ENCODE measurements at regions of chr2 and their contacts with region 1.

Region 1: DNA sequence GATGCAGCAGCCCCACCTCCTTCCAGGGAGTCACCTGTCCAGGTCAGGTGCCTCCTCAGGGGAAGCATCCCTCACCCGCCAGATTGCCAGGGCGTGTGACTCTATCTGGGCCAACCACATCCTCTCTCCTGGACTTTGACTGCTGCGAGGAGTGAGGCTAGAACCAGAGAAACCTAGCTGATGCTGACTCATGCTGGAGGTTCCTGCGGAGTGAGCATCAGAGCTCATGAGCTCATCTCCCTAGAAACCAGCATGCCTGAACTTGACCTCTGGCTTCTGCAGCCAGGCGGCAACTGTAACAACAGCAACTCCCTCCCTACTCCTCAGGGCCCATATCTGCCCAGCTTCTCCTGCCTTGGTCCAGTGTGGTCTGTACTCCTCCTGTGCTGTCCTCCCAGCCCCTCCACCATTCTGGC is 28.3 kb upstream of the NT5DC4 start:
- DNase-seq: peak in 2 of 5 donors; percentile 25 to 45
- ATAC-seq: peak in 3 of 4 donors; percentile 61 to 83 (median 73)
- H3K4me3 ChIP-seq: no peak overlapping the region
- H3K27ac ChIP-seq: peak overlapping the region in 1 of 12 donors; percentile 77
- H3K4me1 ChIP-seq: peaks cover 0 to 28% (median 0%) of the 10 kb centered on the region in 12 donors
- H3K27me3 ChIP-seq: no peaks in the 10 kb centered on the region
- CTCF ChIP-seq: no peak
- POLR2A ChIP-seq: no peak

Region 2: DNA sequence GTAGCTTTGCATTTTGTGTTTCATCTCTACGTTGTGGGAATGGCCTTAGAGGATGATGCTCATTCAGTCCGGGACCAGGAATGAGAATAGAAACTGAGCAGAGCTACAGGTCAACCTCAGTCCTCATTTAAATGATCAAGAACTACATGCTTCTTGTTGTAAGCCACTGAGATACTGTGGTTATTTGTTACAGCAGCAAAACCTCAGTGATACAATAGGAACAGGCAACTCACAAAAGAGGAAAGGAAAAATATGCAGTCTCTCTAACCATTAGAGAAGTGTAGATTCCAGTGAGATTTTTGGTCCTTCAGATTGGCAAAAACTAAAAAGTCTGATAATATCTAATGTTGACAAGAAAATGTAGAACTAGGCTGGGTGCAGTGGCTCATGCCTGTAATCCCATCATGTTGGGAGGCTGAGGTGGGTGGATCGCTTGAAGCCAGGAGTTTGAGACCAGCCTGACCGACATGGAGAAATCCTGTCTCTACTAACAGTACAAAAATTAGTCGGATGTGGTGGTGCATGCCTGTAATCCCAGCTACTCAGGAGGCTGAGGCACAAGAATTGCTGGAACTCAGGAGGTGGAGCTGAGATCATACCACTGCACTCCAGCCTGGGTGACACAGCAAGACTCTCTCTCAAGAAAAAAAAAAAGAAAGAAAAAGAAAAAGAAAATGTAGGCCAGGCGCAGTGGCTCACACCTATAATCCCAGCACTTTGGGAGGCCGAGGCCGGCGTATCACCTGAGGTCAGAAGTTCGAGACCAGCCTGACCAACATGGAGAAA is 94.8 kb before region 1 on chr2:
- intact Hi-C with region 1: loop called in 1 of 10 experiments (anchors 2 kb)
- DNase-seq: peak in 1 of 5 donors; percentile 1
- ATAC-seq: no peak
- H3K4me3 ChIP-seq: no peak overlapping the region
- H3K27ac ChIP-seq: no peak overlapping the region
- H3K4me1 ChIP-seq: peaks cover 0 to 14% (median 3%) of the 10 kb centered on the region in 12 donors
- H3K27me3 ChIP-seq: no peaks in the 10 kb centered on the region
- CTCF ChIP-seq: no peak
- POLR2A ChIP-seq: no peak

Region 3: DNA sequence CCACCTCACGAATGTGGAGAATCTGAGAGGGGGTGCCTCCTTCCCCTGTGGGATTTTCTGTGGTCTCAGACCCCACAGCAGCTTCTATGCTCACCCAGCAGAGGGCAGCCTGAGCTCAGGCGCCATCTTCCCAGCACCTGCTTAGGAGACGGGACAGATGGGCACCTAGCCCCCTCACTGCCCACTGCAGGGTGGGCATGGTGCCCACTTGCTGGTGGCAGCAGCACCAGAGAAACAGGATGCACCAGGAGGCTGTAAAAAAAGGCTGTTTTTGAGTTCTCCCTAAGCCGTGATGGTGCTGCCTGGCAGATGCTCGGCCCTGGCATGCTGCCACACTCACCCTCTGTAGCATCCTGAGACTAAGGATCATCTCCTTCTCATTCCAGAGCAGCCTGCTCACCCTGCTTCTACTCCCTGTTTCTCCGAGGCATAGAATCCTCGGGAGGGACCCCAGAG is 65.9 kb before region 1 on chr2:
- intact Hi-C with region 1: loop called in 9 of 10 experiments (anchors 1 to 10 kb)
- DNase-seq: peak; percentile 57 to 82 (median 62)
- ATAC-seq: peak; percentile 69 to 79 (median 74)
- H3K4me3 ChIP-seq: peak overlapping the region in 4 of 12 donors; percentile 10 to 34 (median 12)
- H3K27ac ChIP-seq: peak overlapping the region in 11 of 12 donors; percentile 56 to 87 (median 77)
- H3K4me1 ChIP-seq: peaks cover 0 to 79% (median 26%) of the 10 kb centered on the region in 12 donors
- H3K27me3 ChIP-seq: no peaks in the 10 kb centered on the region
- CTCF ChIP-seq: peak; percentile 70 to 91 (median 85)
- POLR2A ChIP-seq: no peak

Region 4: DNA sequence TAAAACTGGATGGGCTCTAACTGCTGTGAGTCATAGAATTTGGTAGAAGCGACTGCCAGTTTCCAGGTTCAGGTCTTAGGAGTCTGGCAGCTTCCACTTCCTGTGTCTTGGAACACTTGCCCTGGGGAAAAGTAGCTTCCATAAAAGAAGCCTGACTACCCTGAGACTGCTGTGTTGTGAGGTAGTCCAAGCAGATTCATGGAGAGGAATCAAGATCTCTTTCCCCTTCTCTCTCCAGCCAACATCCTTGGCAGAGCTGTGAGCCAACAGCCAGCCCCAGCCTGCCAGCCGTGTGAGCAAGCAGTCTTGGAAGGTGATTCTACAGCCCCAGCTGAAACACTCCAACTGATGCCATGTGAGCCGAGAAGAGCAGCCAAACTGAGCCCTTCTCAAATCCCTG is 13.0 kb before region 1 on chr2:
- intact Hi-C with region 1: no loop called
- DNase-seq: no peak
- ATAC-seq: peak in 1 of 4 donors; percentile 46
- H3K4me3 ChIP-seq: no peak overlapping the region
- H3K27ac ChIP-seq: peak overlapping the region in 1 of 12 donors; percentile 17
- H3K4me1 ChIP-seq: peaks cover 0 to 32% (median 0%) of the 10 kb centered on the region in 12 donors
- H3K27me3 ChIP-seq: no peaks in the 10 kb centered on the region
- CTCF ChIP-seq: no peak
- POLR2A ChIP-seq: no peak

Region 5: DNA sequence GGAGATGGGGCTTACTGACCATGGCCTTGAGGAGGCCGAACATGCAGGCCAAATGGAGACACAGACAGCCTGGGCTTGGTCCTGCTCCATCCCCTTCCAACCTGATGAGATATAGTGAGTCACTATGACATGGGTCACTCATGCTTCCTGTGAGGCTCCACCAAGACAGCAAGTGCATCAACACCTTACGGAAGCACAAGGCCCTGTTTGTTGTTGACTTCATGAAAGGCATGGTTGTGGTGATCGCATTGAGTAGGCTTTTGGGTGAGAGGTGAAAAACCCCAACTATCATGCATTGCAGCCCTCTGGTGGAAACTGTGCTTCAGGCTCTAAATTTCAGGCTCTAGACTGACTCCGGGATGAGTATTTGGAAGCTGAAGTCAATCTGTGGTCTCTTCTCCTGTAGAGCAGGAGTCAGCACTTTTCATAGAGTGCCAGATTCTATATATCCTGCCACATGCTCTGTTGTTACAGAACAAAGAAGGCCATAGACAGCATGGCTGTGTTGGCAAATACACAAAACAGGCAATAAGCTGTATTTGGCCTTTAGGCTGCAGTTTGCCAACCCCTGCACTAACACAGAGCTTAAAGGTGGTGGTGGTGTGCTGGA is 228.5 kb after region 1 on chr2:
- intact Hi-C with region 1: no loop called
- DNase-seq: no peak
- ATAC-seq: no peak
- H3K4me3 ChIP-seq: no peak overlapping the region
- H3K27ac ChIP-seq: no peak overlapping the region
- H3K4me1 ChIP-seq: no peaks in the 10 kb centered on the region
- H3K27me3 ChIP-seq: peaks cover 0 to 22% (median 0%) of the 10 kb centered on the region in 9 donors
- CTCF ChIP-seq: no peak
- POLR2A ChIP-seq: no peak

Region 6: DNA sequence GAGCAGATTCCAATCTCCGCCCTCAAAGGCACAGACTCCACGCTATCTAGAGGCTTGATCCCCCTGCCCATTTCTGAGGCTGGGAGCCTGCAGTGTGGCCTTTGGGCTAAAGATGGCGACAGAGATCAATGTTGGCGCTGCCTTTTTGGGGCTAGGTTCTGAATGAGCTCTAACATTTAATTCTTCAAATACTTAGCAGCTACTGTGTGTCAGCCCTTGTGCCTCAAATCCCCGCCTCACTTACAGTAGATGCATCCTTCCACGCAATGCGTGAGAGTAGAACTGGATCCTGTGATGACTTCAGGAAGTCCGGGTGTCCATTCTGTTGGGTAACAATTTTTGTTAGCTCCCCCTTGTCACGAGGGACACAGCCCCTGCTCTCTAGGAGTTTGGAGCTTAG is 387.6 kb after region 1 on chr2:
- intact Hi-C with region 1: no loop called
- DNase-seq: no peak
- ATAC-seq: peak in 3 of 4 donors; percentile 26 to 65 (median 63)
- H3K4me3 ChIP-seq: no peak overlapping the region
- H3K27ac ChIP-seq: no peak overlapping the region
- H3K4me1 ChIP-seq: peaks cover 0 to 3% (median 0%) of the 10 kb centered on the region in 12 donors
- H3K27me3 ChIP-seq: peaks cover 0 to 5% (median 0%) of the 10 kb centered on the region in 9 donors
- CTCF ChIP-seq: peak in 11 of 12 donors; percentile 30 to 57 (median 47)
- POLR2A ChIP-seq: no peak